ENCODE measurements at regions of chr6 and their contacts with region 1.

Region 1: DNA sequence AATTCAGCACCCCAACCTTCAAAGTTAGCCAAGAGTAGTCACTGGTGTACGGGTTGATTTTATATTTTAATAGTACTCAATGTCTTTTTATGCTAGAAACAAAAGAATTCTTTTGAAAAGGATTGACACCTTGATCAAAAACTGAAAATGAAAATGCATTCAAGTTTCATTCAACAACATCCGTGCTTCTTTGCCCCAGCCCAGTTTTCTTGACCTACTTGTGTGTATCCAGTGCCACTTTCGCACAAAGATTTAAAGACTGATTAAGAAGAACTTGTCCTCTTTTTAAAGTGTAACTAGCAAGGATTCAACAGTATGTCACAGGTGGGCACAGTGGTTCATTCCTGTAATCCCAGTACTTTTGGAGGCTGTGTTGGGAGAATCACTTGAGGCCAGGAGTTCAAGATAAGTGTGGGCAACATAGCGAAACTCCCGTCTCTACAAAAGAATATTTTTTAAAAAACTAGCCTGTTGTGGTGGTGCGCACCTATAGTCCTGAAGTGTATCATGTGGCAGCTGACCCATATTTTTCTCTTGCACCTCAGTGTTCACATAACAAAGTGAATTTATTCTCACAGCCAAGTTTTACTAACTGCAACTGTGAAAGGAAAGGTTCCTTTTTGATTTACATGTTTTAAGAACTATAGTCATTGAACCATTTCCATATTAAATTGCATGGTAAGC is 22.7 kb upstream of the CD2AP start:
- DNase-seq: no peak
- H3K4me3 ChIP-seq: no peak overlapping the region
- H3K27ac ChIP-seq: no peak overlapping the region
- H3K4me1 ChIP-seq: no peaks in the 10 kb centered on the region
- H3K27me3 ChIP-seq: no peaks in the 10 kb centered on the region
- CTCF ChIP-seq: no peak

Region 2: DNA sequence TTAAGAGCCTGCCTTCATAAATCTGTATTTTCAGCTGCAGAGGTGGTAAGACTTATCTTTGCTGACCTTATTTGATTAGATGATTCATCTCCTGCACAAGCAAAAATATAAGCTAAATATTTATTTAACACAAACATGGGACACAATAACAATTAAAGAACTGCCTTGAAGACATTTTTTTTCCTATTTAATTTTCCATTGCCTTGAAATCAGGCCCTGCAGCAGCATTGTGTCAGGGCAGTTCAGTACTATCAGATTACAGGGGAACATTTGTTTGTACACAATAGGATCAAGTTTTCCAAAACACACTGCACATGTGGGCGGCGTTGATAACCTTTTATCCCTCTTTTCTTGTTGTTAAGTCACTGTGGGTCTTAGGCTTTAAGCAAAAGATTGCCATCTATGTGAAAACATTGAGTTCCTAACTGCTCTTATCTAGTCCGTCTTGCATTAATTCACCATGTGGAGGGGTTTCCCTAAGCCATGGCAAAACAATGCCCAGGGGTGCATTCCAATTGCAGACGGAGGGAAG is 540.5 kb before region 1 on chr6:
- CTCF ChIA-PET with region 1: no interaction called
- dilution Hi-C with region 1: no loop called
- in situ Hi-C with region 1: no loop called
- intact Hi-C with region 1: no loop called
- DNase-seq: no peak
- H3K4me3 ChIP-seq: no peak overlapping the region
- H3K27ac ChIP-seq: no peak overlapping the region
- H3K4me1 ChIP-seq: no peaks in the 10 kb centered on the region
- H3K27me3 ChIP-seq: no peaks in the 10 kb centered on the region
- CTCF ChIP-seq: no peak

Region 3: GRCh38 chr6:47302043-47302442 is 152.8 kb before region 1 on chr6:
- CTCF ChIA-PET with region 1: no interaction called
- dilution Hi-C with region 1: no loop called
- in situ Hi-C with region 1: no loop called
- intact Hi-C with region 1: no loop called
- DNase-seq: no peak
- H3K4me3 ChIP-seq: no peak overlapping the region
- H3K27ac ChIP-seq: no peak overlapping the region
- H3K4me1 ChIP-seq: peaks cover 11% of the 10 kb centered on the region
- H3K27me3 ChIP-seq: no peaks in the 10 kb centered on the region
- CTCF ChIP-seq: no peak

Region 4: DNA sequence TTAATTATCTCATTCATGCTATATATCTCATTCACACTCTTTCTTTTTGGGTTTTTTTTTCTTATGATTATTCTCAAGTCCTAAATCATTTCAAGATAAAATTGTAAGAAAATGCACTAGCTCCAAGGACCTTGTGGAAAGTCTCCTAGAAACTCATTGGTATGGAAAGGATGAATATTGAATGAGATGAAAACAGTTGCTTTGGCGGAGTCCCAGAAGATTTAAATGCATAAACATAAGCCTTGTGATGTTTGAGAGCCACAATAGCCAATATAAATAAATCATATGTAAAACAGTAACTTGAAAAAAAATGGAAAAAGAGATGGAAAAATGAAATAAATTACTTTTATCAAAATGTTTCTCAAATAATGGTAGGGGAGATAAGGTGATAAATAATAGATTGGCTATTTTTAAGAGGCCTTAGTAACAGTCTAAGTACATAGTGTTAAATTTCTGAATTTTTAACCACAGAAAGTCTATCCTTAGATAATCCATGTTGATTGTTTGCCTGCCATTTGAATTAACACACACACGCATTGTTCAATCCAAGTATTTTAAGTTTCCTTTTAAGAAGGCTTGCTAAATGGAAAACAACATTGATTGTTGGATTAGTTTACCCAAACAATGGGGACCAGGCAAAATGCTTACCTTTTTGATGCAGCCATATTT is 58.3 kb before region 1 on chr6:
- CTCF ChIA-PET with region 1: no interaction called
- dilution Hi-C with region 1: loop called (anchors 5 kb)
- in situ Hi-C with region 1: no loop called
- intact Hi-C with region 1: no loop called
- DNase-seq: no peak
- H3K4me3 ChIP-seq: no peak overlapping the region
- H3K27ac ChIP-seq: no peak overlapping the region
- H3K4me1 ChIP-seq: no peaks in the 10 kb centered on the region
- H3K27me3 ChIP-seq: peaks cover 2% of the 10 kb centered on the region
- CTCF ChIP-seq: no peak

Measured in mammary epithelial cell (primary cell).